ENCODE measurements at regions of chr4 and their contacts with region 1.

Region 1: GRCh38 chr4:117134386-117134785 is 49.0 kb upstream of the TRAM1L1 start:
- DNase-seq: peak; percentile 41
- H3K4me3 ChIP-seq: no peak overlapping the region
- CTCF ChIP-seq: peak; percentile 44

Region 2: GRCh38 chr4:117331817-117332216 is 197.4 kb after region 1 on chr4:
- CTCF ChIA-PET with region 1: no interaction called
- POLR2A ChIA-PET with region 1: no interaction called
- DNase-seq: no peak
- H3K4me3 ChIP-seq: no peak overlapping the region
- CTCF ChIP-seq: no peak

Region 3: GRCh38 chr4:117370944-117371684 is 236.7 kb after region 1 on chr4:
- CTCF ChIA-PET with region 1: no interaction called
- POLR2A ChIA-PET with region 1: no interaction called
- DNase-seq: no peak
- H3K4me3 ChIP-seq: no peak overlapping the region
- CTCF ChIP-seq: no peak

Region 4: GRCh38 chr4:118273642-118274041 is 1139.3 kb after region 1 on chr4:
- CTCF ChIA-PET with region 1: interaction called, 13 read pairs
- POLR2A ChIA-PET with region 1: no interaction called
- DNase-seq: no peak
- H3K4me3 ChIP-seq: no peak overlapping the region
- CTCF ChIP-seq: no peak

Measured in AG04449 (cell line).